ENCODE measurements at regions of chr1 and their contacts with region 1.

Region 1: GRCh38 chr1:198756470-198756869 is 117.6 kb downstream of the PTPRC start:
- DNase-seq: peak; percentile 41
- ATAC-seq: peak; percentile 38; the same call in 1 of the 2 replicates
- H3K4me3 ChIP-seq: no peak overlapping the region
- H3K27ac ChIP-seq: no peak overlapping the region
- H3K4me1 ChIP-seq: no peaks in the 10 kb centered on the region
- H3K27me3 ChIP-seq: no peaks in the 10 kb centered on the region
- CTCF ChIP-seq: peak; percentile 46; the same call in 1 of the 2 replicates

Region 2: DNA sequence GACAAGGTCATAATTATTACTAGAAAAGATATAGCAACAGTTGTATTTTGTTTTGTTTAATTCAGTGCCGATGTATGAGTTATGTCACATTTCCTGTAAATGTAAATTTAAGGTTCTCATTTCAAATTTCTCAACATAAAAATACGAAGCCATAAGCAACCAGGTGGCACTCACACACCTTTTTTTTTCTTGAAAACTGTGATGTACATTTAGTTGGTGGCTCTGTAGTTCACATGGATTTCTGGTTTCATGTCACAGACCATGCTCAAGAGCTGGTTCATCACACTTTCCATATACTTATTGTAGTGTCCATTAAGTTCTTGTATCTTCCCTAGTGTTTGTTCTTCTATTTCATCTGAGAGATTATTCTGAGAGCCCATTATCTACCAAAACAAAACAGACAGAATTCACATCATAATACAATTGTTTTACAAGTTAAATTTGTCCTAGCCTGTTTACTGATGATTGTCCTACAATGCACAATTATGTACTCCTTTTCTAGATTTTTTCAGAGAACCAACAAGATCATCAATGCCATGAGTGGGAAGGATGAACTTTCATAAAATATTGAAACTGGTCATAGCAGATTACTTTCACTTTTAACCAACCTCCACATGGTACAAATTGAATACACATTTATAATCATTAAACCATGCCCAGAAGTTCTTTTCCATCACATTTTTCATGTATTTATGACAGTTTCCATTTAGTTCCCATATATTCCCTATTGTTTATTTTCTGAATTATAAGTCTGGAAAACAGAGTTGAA is 233.1 kb before region 1 on chr1:
- CTCF ChIA-PET with region 1: no interaction called
- POLR2A ChIA-PET with region 1: interaction called, 11 read pairs
- intact Hi-C with region 1: no loop called
- DNase-seq: no peak
- ATAC-seq: no peak
- H3K4me3 ChIP-seq: no peak overlapping the region
- H3K27ac ChIP-seq: no peak overlapping the region
- H3K4me1 ChIP-seq: peaks cover 8% of the 10 kb centered on the region
- H3K27me3 ChIP-seq: no peaks in the 10 kb centered on the region
- CTCF ChIP-seq: no peak

Region 3: GRCh38 chr1:199113265-199113869 is 356.9 kb after region 1 on chr1:
- CTCF ChIA-PET with region 1: no interaction called
- POLR2A ChIA-PET with region 1: no interaction called
- intact Hi-C with region 1: loop called (anchors 5 kb)
- DNase-seq: peak; percentile 73
- ATAC-seq: peak; percentile 73
- H3K4me3 ChIP-seq: no peak overlapping the region
- H3K27ac ChIP-seq: no peak overlapping the region
- H3K4me1 ChIP-seq: no peaks in the 10 kb centered on the region
- H3K27me3 ChIP-seq: no peaks in the 10 kb centered on the region
- CTCF ChIP-seq: peak; percentile 82

Region 4: DNA sequence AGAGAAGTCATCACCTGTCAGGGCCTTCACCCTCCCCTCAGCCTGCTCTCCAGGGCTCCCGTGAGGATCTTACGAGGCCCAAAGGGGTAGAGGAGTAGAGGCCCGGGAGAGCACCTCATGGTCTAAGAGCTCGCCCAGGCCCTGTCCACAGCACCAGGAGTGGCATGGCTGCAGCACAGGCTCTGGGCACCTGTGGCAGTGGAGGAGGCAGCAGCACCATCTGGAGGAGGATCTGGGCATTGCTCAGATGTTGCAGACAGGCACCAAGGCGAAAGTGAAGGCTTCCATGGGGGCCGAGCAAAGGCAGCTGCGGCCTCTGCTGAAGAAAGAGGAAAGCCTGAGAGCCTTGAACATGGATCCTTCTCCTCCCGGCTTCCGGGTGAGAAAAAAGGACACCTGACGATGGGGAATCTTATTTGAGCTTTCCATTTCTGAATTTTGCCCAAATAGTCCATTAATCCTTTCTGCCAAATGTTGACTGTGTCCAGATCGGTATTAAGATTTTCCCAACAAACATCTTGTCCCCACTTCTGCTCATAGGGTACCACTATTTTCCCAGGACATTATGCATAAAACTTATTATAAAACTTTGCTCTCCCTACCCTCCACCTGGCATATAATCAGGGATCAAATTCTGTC is 487.1 kb after region 1 on chr1:
- CTCF ChIA-PET with region 1: no interaction called
- POLR2A ChIA-PET with region 1: no interaction called
- intact Hi-C with region 1: loop called (anchors 5 kb)
- DNase-seq: peak; percentile 70
- ATAC-seq: peak; percentile 93
- H3K4me3 ChIP-seq: no peak overlapping the region; the same call in 1 of the 2 replicates
- H3K27ac ChIP-seq: no peak overlapping the region
- H3K4me1 ChIP-seq: no peaks in the 10 kb centered on the region
- H3K27me3 ChIP-seq: no peaks in the 10 kb centered on the region
- CTCF ChIP-seq: peak; percentile 71

Region 5: DNA sequence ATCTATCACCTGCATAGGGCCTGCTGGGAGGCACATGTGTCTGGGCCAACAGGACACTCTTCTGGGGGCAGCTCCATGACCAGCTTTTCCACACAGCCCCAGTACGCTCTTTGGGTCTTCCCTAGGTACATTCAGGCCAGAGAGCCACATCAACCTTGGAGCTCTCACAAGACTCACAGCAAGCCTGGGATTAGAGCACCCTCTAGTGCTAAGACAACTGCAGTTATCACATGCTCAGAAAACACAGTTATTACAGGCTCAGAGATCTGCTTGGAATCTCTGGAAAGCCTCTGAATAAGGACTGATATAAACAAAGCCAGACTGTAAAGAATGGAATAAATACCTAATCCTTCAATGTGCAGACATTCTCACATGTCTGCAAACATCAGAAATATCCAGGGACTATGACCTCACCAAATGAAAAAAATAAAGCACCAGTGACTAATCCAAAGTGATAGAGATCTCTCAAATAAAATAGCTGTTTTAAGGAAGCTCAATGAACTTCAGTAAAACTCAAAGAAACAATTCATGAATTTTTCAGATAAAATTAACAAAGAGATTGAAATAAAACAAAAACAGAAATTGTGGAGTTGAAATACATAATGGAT is 707.2 kb after region 1 on chr1:
- CTCF ChIA-PET with region 1: interaction called, 7 read pairs
- POLR2A ChIA-PET with region 1: no interaction called
- intact Hi-C with region 1: loop called (anchors 5 kb)
- DNase-seq: peak; percentile 67
- ATAC-seq: peak; percentile 62
- H3K4me3 ChIP-seq: no peak overlapping the region
- H3K27ac ChIP-seq: no peak overlapping the region
- H3K4me1 ChIP-seq: no peaks in the 10 kb centered on the region
- H3K27me3 ChIP-seq: no peaks in the 10 kb centered on the region
- CTCF ChIP-seq: peak; percentile 74

Region 6: DNA sequence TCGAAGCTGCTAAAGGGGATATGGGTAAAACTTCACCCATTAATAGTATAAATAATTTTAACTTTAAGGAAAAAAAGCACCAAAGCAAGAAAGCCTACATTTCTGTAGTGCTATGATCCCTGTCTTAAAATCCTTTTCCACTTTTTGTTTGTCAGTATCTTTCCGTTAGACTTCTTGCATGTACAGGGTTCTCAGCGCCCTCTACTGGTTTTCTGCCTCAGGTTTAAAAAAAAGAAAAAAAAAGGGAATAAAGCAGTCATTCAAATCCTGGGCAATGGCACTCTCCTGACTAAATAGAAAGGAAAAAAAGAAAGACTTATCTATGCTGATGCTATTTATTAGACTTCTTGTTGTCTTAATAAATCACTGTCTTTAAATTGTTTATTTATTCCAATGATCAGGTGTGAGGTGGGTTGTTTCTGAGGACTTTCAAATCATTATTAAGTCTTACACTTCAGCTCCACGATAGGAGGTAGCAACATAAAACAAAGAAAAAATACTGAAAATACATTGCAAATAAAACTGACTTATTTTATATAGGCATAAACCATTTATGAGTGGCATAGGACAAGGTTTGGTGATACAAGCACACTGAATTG is 795.6 kb after region 1 on chr1:
- CTCF ChIA-PET with region 1: no interaction called
- POLR2A ChIA-PET with region 1: no interaction called
- intact Hi-C with region 1: loop called (anchors 2 kb)
- DNase-seq: peak; percentile 73
- ATAC-seq: peak; percentile 22; the same call in 1 of the 2 replicates
- H3K4me3 ChIP-seq: no peak overlapping the region
- H3K27ac ChIP-seq: no peak overlapping the region
- H3K4me1 ChIP-seq: peaks cover 12% of the 10 kb centered on the region; the same call in 1 of the 2 replicates
- H3K27me3 ChIP-seq: no peaks in the 10 kb centered on the region
- CTCF ChIP-seq: peak; percentile 79